Transverse colon (tissue), 4 donors: ENCODE measurements at regions of chr6 and their contacts with region 1.

Region 1: DNA sequence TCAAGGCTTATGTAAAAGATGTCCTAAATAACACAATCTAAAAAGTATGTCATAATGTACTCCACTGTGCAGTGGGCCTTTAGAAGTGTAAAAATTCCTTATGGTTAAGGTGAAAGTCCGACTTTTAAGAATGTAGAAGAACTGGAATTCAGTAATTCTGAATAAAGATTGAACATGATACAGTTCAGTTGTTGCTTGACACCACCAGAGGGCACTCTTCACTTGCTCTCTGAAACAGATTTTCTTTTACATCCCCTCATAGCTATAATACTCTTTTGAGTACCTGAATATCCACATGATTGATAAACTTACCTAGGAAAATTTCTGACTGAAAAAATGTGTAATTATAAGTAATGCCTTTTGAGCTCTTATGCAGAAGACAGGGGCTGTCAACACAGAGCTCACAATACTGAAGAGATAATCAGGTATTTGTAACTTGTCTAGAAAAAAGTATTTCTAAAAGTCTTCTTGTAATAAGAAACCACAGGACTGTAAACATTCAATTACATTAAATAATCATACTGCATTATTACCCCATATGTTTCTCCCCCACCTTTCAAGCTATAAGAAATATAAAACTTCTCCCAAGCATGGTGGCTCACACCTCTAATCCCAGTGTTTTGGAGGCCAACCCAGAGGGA is 92.1 kb downstream of the POPDC3 start:
- DNase-seq: peak; percentile 23
- H3K4me3 ChIP-seq: no peak overlapping the region
- H3K27ac ChIP-seq: no peak overlapping the region
- H3K4me1 ChIP-seq: no peaks in the 10 kb centered on the region
- H3K27me3 ChIP-seq: no peaks in the 10 kb centered on the region
- CTCF ChIP-seq: peak; percentile 81 to 90 (median 86)
- EP300 ChIP-seq: no peak
- POLR2A ChIP-seq: no peak

Region 2: DNA sequence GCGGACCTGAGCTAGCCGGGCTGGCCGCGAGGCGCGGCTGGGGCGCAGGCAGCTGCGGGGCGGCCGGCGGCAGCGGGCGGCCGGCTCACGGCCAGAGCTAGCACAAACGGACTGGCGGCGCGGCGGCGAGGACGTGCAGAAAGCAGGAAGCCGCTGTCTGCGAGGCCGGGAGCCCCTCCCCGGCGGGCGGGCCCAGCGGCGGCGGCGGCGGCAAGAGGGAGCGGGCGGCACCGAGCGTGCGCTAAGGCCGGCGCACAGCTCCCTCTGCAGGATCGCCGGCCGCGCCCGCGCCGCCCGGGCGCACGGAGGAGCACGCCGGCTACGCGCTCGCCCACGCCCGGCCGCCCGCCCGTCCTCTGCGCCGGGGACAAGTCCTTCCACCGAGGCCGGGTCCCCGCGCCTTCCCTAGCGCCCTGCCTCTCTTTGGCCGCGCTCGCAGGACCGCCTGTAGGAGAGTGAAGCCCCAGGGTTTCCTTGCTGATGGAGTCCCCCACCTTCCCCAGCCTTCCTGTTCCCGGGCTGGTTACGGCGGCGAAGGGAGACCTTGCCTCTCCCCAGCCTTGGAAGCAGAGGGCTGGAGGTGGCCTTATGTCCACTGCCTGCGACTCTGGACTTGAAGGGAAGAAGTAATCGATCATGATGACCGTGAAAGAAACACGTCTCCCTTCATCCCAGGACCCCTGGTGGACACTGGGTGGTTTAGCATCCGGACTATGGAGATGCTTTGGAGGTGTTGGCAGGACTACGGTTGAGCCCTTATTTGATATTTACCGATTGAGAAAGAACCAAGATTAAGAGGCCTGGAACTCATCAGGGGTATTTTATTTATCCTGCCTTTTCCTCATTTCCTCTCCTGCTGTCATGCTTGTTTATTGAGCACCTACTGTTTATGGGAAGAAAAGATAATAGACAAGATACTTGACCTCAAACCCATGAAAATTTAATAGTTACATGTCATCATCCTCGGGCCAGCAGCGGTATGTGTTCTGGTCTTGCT is 315.5 kb after region 1 on chr6 and contains the start of gene PREP:
- in situ Hi-C with region 1: loop called in 3 of 4 experiments (anchors 5 to 10 kb)
- intact Hi-C with region 1: loop called (anchors 5 kb)
- DNase-seq: peak; percentile 90
- H3K4me3 ChIP-seq: peak within 1 kb of the TSS; percentile 74 to 96 (median 82)
- H3K27ac ChIP-seq: peak within 1 kb of the TSS; percentile 88 to 92 (median 91)
- H3K4me1 ChIP-seq: peaks cover 8 to 41% (median 29%) of the 10 kb centered on the region in 4 donors
- H3K27me3 ChIP-seq: no peaks in the 10 kb centered on the region
- CTCF ChIP-seq: peak; percentile 70 to 95 (median 84)
- EP300 ChIP-seq: no peak
- POLR2A ChIP-seq: no peak
- total RNA-seq, gene PREP: 32.9 to 63.2 (median 41.2) TPM

Region 3: GRCh38 chr6:105424175-105424783 is 336.6 kb after region 1 on chr6:
- in situ Hi-C with region 1: loop called in 2 of 4 experiments (anchors 5 to 10 kb)
- intact Hi-C with region 1: no loop called
- DNase-seq: peak; percentile 55
- H3K4me3 ChIP-seq: no peak overlapping the region
- H3K27ac ChIP-seq: no peak overlapping the region
- H3K4me1 ChIP-seq: no peaks in the 10 kb centered on the region
- H3K27me3 ChIP-seq: no peaks in the 10 kb centered on the region
- CTCF ChIP-seq: peak; percentile 58 to 71 (median 65)
- EP300 ChIP-seq: no peak
- POLR2A ChIP-seq: no peak

Region 4: DNA sequence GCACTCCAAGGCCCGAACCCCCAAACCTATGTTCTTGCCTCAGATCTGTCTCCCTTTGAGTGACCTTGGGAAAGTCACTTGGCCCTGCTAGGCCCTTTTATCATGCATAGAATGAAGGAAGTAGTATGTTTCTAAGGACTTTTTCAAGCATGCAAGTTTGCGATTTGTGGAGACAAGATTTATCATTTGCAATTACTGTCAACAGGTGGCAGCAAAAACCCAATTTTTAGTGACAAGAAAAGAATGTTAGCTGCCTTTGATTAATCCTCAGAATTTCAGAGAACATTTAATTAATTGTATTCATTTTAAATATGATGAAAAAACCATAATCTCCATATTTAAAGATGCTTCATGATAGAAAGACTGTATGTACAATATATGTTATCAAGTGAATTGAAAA is 343.5 kb after region 1 on chr6:
- in situ Hi-C with region 1: loop called in 2 of 4 experiments (anchors 5 to 10 kb)
- intact Hi-C with region 1: no loop called
- DNase-seq: no peak
- H3K4me3 ChIP-seq: no peak overlapping the region
- H3K27ac ChIP-seq: no peak overlapping the region
- H3K4me1 ChIP-seq: no peaks in the 10 kb centered on the region
- H3K27me3 ChIP-seq: no peaks in the 10 kb centered on the region
- CTCF ChIP-seq: peak; percentile 37 to 60 (median 53)
- EP300 ChIP-seq: no peak
- POLR2A ChIP-seq: no peak

Region 5: GRCh38 chr6:106244931-106245330 is 1157.2 kb after region 1 on chr6:
- in situ Hi-C with region 1: no loop called
- intact Hi-C with region 1: no loop called
- DNase-seq: no peak
- H3K4me3 ChIP-seq: no peak overlapping the region
- H3K27ac ChIP-seq: no peak overlapping the region
- H3K4me1 ChIP-seq: peaks cover 0 to 3% (median 0%) of the 10 kb centered on the region in 4 donors
- H3K27me3 ChIP-seq: no peaks in the 10 kb centered on the region
- CTCF ChIP-seq: no peak
- EP300 ChIP-seq: no peak
- POLR2A ChIP-seq: no peak